ENCODE measurements at regions of chr15 and their contacts with region 1.

Region 1: GRCh38 chr15:59656897-59657634 is at the start of gene GTF2A2:
- DNase-seq: peak; percentile 93
- H3K4me3 ChIP-seq: peak within 1 kb of the TSS; percentile 73 to 81
- H3K27ac ChIP-seq: peak within 1 kb of the TSS; percentile 68 to 74
- H3K4me1 ChIP-seq: peaks cover 5% of the 10 kb centered on the region
- H3K27me3 ChIP-seq: no peaks in the 10 kb centered on the region
- CTCF ChIP-seq: no peak
- POLR2A ChIP-seq: peak; percentile 71
- total RNA-seq, gene GTF2A2: 34.2 to 47.4 TPM

Region 2: DNA sequence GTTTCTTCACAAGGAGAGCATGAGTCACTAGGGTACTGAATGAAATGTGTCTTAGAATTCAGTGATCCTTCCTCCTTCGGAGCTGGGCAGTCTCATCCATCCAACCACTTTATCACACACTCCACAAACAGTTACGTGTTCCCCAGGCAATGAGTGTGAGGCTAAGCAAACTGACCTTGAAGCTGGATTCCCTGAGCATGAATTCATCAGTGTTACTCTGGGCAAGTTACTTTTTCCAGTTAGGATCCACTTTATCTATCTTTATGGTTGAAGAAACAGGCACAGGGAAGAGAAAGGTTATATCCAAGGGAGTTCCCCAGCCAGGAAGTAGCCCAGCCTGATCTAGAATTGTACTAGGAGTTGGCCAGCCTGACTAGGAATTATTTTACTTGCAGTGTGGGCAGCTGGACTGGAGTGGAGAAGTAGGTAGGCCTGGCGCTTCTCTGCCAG is 62.5 kb before region 1 on chr15:
- intact Hi-C with region 1: no loop called
- DNase-seq: no peak
- H3K4me3 ChIP-seq: no peak overlapping the region
- H3K27ac ChIP-seq: no peak overlapping the region
- H3K4me1 ChIP-seq: no peaks in the 10 kb centered on the region
- H3K27me3 ChIP-seq: no peaks in the 10 kb centered on the region
- CTCF ChIP-seq: no peak
- POLR2A ChIP-seq: no peak

Region 3: DNA sequence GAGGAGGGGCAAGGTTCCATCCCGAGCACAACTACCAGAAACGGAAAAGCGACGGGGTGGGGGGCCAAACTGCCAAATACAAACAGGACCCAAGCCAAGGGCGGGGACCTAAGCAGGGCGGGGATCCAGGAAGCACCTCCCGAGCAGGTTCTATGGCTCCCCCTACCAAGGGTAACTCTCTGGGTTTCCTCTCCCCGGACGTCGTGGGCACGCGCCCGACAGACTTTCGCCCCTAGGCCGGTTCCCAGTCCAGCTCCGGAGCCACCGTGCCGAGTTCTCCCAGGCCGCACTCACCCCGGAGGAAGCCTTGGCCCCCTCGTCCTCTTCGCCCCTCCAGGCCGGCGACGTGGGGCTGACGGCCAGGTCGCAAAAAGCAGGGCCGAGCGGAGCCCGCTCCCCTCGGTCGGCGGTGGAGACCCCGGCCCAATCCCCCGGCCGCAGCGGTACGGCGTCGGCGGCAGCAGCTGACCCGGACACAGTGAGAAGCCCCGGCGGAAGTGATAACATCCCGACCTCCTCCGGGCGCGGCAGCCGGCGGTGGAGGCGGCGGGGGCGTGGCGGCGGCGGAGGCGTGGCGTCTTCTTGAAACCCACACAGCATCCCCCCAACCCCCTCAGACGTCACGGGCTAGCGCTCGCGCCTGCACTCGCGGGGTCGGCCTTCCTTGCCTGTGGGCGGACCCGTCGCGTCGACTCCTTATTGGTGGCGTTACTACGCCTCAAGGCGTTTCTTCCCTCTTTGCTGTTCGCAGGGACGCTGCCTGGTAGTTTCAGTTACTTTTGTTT is 32.0 kb after region 1 on chr15 and contains the start of gene BNIP2:
- intact Hi-C with region 1: loop called (anchors 1 kb)
- DNase-seq: peak; percentile 98
- H3K4me3 ChIP-seq: peak within 1 kb of the TSS; percentile 78 to 85
- H3K27ac ChIP-seq: peak within 1 kb of the TSS; percentile 98 to 99
- H3K4me1 ChIP-seq: peaks cover 4% of the 10 kb centered on the region
- H3K27me3 ChIP-seq: no peaks in the 10 kb centered on the region
- CTCF ChIP-seq: peak in 1 of 4 experiments; percentile 8
- POLR2A ChIP-seq: peak; percentile 90
- total RNA-seq, gene BNIP2: 76.6 to 124 TPM

Region 4: GRCh38 chr15:60250316-60250715 is 593.2 kb after region 1 on chr15:
- intact Hi-C with region 1: no loop called
- DNase-seq: no peak
- H3K4me3 ChIP-seq: no peak overlapping the region
- H3K27ac ChIP-seq: no peak overlapping the region
- H3K4me1 ChIP-seq: no peaks in the 10 kb centered on the region
- H3K27me3 ChIP-seq: no peaks in the 10 kb centered on the region
- CTCF ChIP-seq: no peak
- POLR2A ChIP-seq: no peak